ENCODE measurements at regions of chr10 and their contacts with region 1.

Region 1: GRCh38 chr10:55091691-55092328 is 290.8 kb upstream of the PCDH15 start:
- DNase-seq: no peak
- ATAC-seq: no peak
- H3K4me3 Mint-ChIP-seq: no peak overlapping the region
- H3K27ac Mint-ChIP-seq: no peak overlapping the region
- H3K4me1 Mint-ChIP-seq: no peaks in the 10 kb centered on the region
- H3K27me3 Mint-ChIP-seq: no peaks in the 10 kb centered on the region

Region 2: DNA sequence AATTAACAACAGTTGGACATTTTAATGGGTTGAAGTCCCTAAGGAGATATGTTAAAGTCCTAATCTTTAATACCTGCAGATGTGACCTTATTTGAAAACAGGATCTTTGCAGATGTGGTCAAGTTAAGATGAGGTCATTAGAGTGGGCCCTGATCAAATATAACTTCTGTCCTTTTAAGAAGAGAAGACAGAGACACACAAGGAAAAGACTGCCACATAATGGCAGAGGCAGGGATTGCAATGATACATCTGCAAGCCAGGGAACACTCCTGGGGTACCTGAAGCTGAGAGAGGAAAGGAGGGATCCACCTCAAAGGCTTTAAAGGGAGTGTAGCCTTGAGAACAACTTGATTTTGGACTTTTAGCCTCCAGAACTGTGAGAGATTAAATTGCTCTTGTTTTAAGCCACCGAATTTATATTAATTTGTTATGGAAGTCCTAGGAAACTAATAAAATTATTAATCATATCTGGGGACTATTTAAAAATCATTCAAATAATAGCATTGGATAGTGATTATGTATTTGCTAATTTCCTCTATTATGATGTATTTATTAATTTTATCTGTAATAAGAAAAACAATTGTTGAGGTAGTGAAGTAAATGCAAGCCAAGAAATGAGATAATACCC is 409.2 kb after region 1 on chr10:
- CTCF ChIA-PET with region 1: no interaction called
- POLR2A ChIA-PET with region 1: no interaction called
- intact Hi-C with region 1: loop called in 1 of 2 experiments (anchors 5 kb)
- DNase-seq: peak; percentile 13
- ATAC-seq: no peak
- H3K4me3 Mint-ChIP-seq: no peak overlapping the region
- H3K27ac Mint-ChIP-seq: no peak overlapping the region
- H3K4me1 Mint-ChIP-seq: no peaks in the 10 kb centered on the region
- H3K27me3 Mint-ChIP-seq: no peaks in the 10 kb centered on the region